ENCODE measurements at regions of chr5 and their contacts with region 1.

Region 1: GRCh38 chr5:149561848-149562247 is 10.6 kb upstream of the CSNK1A1 start:
- DNase-seq: no peak
- ATAC-seq: peak; percentile 63
- H3K4me3 ChIP-seq: no peak overlapping the region
- H3K4me1 ChIP-seq: peaks cover 4% of the 10 kb centered on the region
- CTCF ChIP-seq: no peak

Region 2: DNA sequence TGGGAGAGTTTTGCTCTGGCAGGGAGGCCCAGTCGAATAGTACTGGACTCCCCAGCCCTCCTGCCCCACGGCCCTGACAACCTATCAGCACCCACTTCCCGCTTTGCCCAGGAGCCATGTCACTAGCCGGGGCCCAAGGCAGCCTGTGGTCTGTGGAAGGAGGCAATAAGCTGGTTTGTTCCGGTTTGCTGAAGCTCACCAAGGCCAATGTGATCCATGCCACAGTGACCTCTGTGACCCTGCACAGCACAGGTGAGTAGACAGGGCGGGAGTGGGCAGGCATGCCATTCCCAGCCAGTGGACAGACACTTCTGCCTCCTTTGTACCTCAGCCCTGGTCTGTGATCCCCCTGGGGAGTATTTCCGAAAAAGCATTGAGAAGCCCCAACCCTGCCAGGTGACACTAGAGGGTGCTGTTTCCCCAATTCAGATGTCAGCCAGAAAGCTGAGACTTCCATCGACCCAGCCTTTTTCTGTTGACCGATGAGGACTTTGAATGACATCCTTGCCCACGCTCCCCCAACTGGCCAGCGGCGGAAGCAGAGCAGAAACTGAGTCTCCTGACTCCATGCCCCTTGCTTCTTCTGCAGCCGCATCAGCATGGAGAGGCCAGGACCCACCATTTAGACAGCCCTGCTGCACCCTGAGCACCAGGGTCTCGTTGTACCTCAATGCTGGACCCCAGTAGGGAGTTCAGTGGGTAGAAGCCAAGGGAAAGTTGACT is 194.4 kb before region 1 on chr5:
- intact Hi-C with region 1: loop called in 1 of 2 experiments (anchors 10 kb)
- DNase-seq: peak in 2 of 3 donors; percentile 56 to 73
- ATAC-seq: peak; percentile 79
- H3K4me3 ChIP-seq: no peak overlapping the region
- H3K4me1 ChIP-seq: peaks cover 5% of the 10 kb centered on the region
- CTCF ChIP-seq: peak; percentile 41

Region 3: DNA sequence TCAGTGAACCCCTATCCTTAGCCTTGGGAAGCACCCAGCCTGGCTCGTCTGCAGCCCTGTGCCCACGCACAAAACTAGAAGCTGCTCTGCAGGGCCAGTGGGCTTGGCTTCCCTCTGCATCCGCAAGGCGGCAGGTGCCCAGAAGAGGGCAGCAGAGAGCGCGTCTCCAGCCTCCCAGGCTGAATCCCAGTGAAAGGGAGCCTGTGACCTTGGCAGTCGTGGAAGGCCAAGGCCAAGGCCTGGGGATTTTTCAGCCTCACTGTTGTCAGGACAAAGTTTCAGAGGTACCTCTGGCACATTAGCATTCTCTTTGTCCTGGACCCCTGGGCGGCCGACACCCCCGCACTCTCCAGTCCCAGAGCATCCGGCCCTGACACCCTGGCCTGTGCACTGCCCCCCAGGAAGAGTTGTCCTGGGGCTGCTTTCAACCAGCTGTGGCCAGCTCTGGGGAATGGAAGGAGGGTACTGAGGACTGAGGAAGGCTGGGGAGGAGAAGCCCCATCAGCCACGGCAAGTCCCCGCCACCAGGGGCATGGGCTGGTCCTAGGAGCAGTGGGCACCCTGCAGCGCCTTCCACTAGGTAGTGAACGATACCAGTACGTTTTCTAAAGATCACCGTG is 119.2 kb before region 1 on chr5:
- intact Hi-C with region 1: loop called in 1 of 2 experiments (anchors 5 kb)
- DNase-seq: peak; percentile 82 to 94 (median 92)
- ATAC-seq: peak; percentile 82
- H3K4me3 ChIP-seq: no peak overlapping the region
- H3K4me1 ChIP-seq: peaks cover 14% of the 10 kb centered on the region
- CTCF ChIP-seq: peak; percentile 89

Region 4: GRCh38 chr5:149452007-149452664 is 109.7 kb before region 1 on chr5:
- intact Hi-C with region 1: loop called in 1 of 2 experiments (anchors 5 kb)
- DNase-seq: peak; percentile 72 to 87 (median 77)
- ATAC-seq: peak; percentile 87
- H3K4me3 ChIP-seq: no peak overlapping the region
- H3K4me1 ChIP-seq: peaks cover 37% of the 10 kb centered on the region
- CTCF ChIP-seq: no peak

Region 5: GRCh38 chr5:149666212-149666852 is 104.5 kb after region 1 on chr5:
- intact Hi-C with region 1: no loop called
- DNase-seq: no peak
- ATAC-seq: peak; percentile 69
- H3K4me3 ChIP-seq: no peak overlapping the region
- H3K4me1 ChIP-seq: peaks cover 13% of the 10 kb centered on the region
- CTCF ChIP-seq: no peak